ENCODE measurements at regions of chr2 and their contacts with region 1.

Region 1: GRCh38 chr2:55050133-55050994 is at the start of gene RTN4:
- DNase-seq: peak; percentile 99 to 100
- H3K4me3 ChIP-seq: peak within 1 kb of the TSS; percentile 69 to 98
- H3K27ac ChIP-seq: peak within 1 kb of the TSS; percentile 96 to 99
- H3K4me1 ChIP-seq: peaks cover 0 to 36% (median 23%) of the 10 kb centered on the region in 4 donors
- H3K27me3 ChIP-seq: no peaks in the 10 kb centered on the region
- CTCF ChIP-seq: peak in 1 of 2 experiments; percentile 19

Region 2: GRCh38 chr2:55013936-55014335 is 36.4 kb before region 1 on chr2:
- intact Hi-C with region 1: loop called (anchors 2 kb)
- DNase-seq: no peak
- H3K4me3 ChIP-seq: no peak overlapping the region
- H3K27ac ChIP-seq: no peak overlapping the region
- H3K4me1 ChIP-seq: peaks cover 0 to 87% (median 33%) of the 10 kb centered on the region in 4 donors
- H3K27me3 ChIP-seq: no peaks in the 10 kb centered on the region
- CTCF ChIP-seq: no peak

Region 3: DNA sequence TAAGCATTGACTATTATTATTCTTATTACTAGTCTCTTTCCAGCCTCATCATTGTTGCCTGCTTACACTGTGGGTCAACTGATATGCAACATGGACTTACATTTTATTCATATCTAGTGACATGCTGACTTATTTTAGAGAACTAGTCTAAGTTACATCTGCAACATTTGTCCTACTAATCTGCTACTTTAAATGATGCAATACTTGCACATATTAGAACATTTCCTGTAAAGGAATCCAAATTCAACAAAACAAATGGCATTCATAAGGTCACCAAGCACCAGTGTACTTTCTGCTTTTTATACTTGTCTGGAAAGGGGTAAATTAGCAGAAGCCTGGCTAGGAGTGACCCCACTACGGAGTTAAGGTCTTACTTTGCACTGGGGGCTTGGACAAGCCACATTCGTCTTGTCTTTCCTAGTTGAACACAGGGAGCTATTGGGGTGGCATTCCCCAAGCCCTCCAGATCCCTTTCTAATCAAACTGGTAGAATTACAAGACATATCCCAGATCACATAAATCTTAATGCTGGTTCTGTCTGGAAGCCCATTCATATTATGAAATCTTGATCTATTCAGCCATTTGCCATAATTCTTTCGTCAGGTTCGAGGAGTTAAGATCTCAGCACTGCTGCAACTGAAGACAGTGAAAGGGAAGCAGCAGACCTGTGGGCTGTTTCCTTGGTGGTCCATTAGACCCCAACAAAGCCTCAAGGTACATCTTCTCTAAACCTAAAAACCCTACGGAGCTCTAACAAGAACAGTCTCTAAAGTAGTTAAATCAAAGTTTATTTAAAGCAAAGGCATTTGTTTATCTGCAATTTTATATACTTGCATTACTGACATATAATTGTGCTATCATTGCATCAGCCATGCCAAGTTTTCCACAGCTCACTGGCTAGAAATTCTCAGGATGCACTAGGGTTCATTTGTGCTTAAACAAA is 49.8 kb after region 1 on chr2:
- intact Hi-C with region 1: loop called (anchors 5 kb)
- DNase-seq: no peak
- H3K4me3 ChIP-seq: peak overlapping the region in 1 of 2 donors; percentile 31
- H3K27ac ChIP-seq: peak overlapping the region; percentile 75 to 85
- H3K4me1 ChIP-seq: peaks cover 0 to 72% (median 44%) of the 10 kb centered on the region in 4 donors
- H3K27me3 ChIP-seq: no peaks in the 10 kb centered on the region
- CTCF ChIP-seq: peak in 1 of 2 experiments; percentile 7

Region 4: DNA sequence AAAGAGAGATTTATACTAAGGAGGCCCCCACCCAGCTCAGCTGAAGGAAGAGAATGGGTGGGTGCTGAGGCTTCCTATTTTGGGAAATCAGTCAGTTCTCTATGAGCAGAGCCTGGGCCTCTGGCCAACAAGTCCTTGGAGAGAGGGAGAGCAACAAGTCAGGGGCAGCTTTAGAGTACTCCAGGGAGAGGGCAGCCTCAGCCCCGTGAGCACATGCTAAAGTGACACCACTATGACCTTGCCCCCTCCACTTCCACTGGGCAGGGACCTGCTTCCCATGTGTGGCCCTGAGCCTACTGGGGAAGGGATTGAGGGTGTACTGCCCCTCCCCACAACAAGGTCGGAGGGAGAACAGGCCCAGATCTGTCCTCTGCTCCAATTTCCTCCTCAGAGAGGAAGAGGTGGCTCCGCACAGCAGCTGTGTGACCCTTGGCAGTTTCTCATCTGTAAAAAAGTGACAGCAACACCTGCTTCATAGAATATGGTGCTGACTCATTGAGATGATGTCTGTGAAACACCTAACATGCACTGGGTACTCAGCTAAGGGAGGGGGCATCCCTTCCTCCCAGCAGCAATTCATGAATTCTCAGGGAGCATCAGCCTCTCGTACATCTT is 108.8 kb after region 1 on chr2:
- intact Hi-C with region 1: loop called (anchors 5 kb)
- DNase-seq: peak; percentile 77 to 88
- H3K4me3 ChIP-seq: no peak overlapping the region
- H3K27ac ChIP-seq: peak overlapping the region; percentile 68 to 78
- H3K4me1 ChIP-seq: peaks cover 6 to 78% (median 68%) of the 10 kb centered on the region in 4 donors
- H3K27me3 ChIP-seq: no peaks in the 10 kb centered on the region
- CTCF ChIP-seq: no peak

Region 5: DNA sequence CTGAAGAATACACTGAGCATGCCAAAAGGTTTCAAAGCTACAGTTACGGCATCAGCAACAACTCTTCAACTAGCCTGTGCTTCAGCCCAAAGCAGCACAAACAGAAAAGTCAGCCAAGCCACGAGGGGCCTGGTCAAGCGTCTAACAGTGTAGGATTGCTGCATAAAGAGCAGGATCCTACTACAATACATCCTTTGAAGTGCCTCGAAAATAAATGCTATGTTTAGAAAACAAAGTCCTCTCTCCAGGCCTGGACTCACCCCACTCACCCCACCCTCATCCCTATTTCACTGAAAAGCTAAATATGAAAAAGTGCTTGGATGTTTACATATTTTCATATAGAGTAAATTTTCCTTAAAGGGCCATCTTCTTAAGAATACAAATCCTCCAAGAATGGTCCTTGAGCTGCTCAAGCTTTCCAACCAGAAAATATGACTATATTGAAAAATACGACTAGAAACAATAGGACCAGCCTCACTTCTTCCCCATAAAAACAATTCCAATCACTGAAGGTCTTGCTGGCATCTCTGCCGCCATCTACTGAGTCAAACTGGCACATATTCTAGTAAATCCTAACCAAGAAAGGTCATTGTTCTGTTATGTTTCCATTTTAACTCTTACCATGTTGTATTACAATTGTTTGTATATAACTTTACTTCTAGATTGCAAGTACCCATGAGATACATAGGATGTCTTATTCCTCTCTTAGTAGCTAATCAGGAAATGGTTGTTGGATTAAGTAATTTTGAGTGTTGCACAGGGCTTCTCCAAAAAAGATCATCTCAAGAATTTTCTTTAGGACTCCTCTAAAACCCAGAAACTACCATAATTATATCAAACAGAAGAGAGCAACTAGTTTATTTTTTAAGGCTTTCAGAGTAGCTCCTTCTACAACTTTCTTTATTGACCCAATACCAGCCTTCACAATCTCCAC is 118.1 kb after region 1 on chr2:
- intact Hi-C with region 1: loop called (anchors 5 kb)
- DNase-seq: peak; percentile 81 to 83
- H3K4me3 ChIP-seq: no peak overlapping the region
- H3K27ac ChIP-seq: peak overlapping the region; percentile 63 to 74
- H3K4me1 ChIP-seq: peaks cover 0 to 55% (median 36%) of the 10 kb centered on the region in 4 donors
- H3K27me3 ChIP-seq: no peaks in the 10 kb centered on the region
- CTCF ChIP-seq: peak; percentile 79 to 83

Measured in tibial artery (tissue), 4 donors.